CD8-positive, alpha-beta T cell (primary cell): ENCODE measurements at regions of chr17 and their contacts with region 1.

Region 1: DNA sequence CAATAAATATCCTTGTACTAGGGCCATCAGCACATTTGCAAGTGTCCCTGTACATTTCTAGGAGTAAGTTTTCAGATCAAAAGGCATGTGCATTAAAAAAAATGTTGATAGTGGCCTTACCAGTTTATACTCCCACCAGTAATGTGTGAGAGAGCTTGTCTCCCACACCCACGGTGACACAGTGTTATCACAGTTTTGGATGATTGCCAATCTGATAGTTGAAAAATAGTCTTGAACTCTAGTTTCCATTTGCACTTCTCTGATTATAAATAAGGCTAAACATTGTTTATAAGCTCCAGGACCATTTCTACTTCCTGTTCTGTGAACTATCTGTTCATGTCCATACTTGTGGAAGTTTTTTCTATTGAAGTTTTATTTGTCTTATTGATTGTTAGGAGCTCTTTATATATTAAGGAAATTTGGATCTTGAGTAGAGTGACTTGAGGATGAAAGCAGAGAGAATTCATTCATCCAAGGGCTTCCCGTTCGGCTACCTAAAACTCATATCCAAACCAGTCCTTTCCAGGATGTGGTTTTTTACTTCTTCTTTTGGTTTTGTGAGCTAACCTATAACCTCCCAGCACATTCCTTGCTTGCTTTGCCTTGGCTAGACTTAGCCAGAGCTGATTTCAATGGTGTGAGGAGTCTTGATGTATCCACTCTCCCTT is 25.9 kb upstream of the MPRIP start:
- DNase-seq: peak in 2 of 9 experiments; percentile 28 to 55
- ATAC-seq: peak; percentile 44
- H3K4me3 ChIP-seq: no peak overlapping the region
- H3K4me3 Mint-ChIP-seq: no peak overlapping the region
- H3K27ac ChIP-seq: peak overlapping the region in 1 of 2 experiments; percentile 26
- H3K27ac Mint-ChIP-seq: peak overlapping the region; percentile 14
- H3K4me1 ChIP-seq: peaks cover 8% of the 10 kb centered on the region
- H3K4me1 Mint-ChIP-seq: peaks cover 23% of the 10 kb centered on the region
- H3K27me3 ChIP-seq: no peaks in the 10 kb centered on the region
- H3K27me3 Mint-ChIP-seq: no peaks in the 10 kb centered on the region
- CTCF ChIP-seq: no peak

Region 2: GRCh38 chr17:16973760-16974540 is 42.4 kb before region 1 on chr17:
- CTCF ChIA-PET with region 1: no interaction called
- POLR2A ChIA-PET with region 1: no interaction called
- intact Hi-C with region 1: no loop called
- DNase-seq: no peak
- ATAC-seq: no peak
- H3K4me3 ChIP-seq: no peak overlapping the region
- H3K4me3 Mint-ChIP-seq: no peak overlapping the region
- H3K27ac ChIP-seq: no peak overlapping the region
- H3K27ac Mint-ChIP-seq: no peak overlapping the region
- H3K4me1 ChIP-seq: no peaks in the 10 kb centered on the region
- H3K4me1 Mint-ChIP-seq: no peaks in the 10 kb centered on the region
- H3K27me3 ChIP-seq: no peaks in the 10 kb centered on the region
- H3K27me3 Mint-ChIP-seq: no peaks in the 10 kb centered on the region
- CTCF ChIP-seq: no peak

Region 3: DNA sequence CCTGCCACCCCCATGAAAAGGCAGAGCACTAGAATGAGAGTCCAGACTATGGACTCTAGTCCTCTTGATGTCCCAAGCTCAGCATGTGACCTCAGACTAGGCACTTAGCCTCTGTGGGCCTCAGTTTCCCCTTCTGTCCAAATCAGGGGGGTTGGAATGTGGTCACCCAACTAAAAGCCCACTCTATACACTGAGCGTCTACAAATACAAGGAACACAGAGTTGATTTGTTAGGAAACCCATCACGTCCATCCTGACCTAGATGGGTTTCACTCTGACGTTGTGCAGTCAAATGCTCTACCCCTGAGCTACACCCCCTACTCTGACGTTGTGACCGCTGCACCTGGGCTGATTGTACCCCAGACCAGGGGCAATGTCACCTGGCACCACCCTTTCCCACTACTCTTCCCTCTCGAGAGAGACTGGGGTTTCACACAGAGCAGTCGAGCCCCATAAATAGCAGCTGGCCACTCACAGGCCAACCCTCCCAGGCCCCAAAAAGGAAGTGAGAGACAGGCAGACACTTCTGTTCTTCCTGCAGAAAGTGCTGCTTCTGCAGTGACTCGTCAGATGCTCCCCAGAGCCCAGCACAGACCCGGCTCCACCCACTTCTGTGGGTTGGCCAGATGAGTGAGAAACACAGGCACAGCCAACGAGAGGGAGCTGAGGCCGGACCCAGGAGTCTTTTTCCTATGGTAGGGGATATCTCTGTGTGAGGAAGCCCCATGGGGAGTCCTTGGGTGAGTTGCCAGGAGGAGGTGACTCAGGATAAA is 28.3 kb before region 1 on chr17:
- CTCF ChIA-PET with region 1: no interaction called
- POLR2A ChIA-PET with region 1: no interaction called
- intact Hi-C with region 1: no loop called
- DNase-seq: peak; percentile 16 to 75 (median 44)
- ATAC-seq: peak; percentile 68
- H3K4me3 ChIP-seq: peak overlapping the region in 1 of 2 experiments; percentile 4
- H3K4me3 Mint-ChIP-seq: peak overlapping the region; percentile 63
- H3K27ac ChIP-seq: peak overlapping the region in 1 of 2 experiments; percentile 79
- H3K27ac Mint-ChIP-seq: peak overlapping the region; percentile 89
- H3K4me1 ChIP-seq: peaks cover 41% of the 10 kb centered on the region
- H3K4me1 Mint-ChIP-seq: peaks cover 31% of the 10 kb centered on the region
- H3K27me3 ChIP-seq: no peaks in the 10 kb centered on the region
- H3K27me3 Mint-ChIP-seq: no peaks in the 10 kb centered on the region
- CTCF ChIP-seq: no peak

Region 4: GRCh38 chr17:17067257-17067656 is 50.9 kb after region 1 on chr17:
- CTCF ChIA-PET with region 1: no interaction called
- POLR2A ChIA-PET with region 1: no interaction called
- intact Hi-C with region 1: loop called in 1 of 2 experiments (anchors 5 kb)
- DNase-seq: no peak
- ATAC-seq: no peak
- H3K4me3 ChIP-seq: no peak overlapping the region
- H3K4me3 Mint-ChIP-seq: no peak overlapping the region
- H3K27ac ChIP-seq: no peak overlapping the region
- H3K27ac Mint-ChIP-seq: no peak overlapping the region
- H3K4me1 ChIP-seq: peaks cover 30% of the 10 kb centered on the region
- H3K4me1 Mint-ChIP-seq: peaks cover 73% of the 10 kb centered on the region
- H3K27me3 ChIP-seq: no peaks in the 10 kb centered on the region
- H3K27me3 Mint-ChIP-seq: no peaks in the 10 kb centered on the region
- CTCF ChIP-seq: no peak

Region 5: GRCh38 chr17:17580662-17581470 is 564.5 kb after region 1 on chr17:
- CTCF ChIA-PET with region 1: no interaction called
- POLR2A ChIA-PET with region 1: no interaction called
- intact Hi-C with region 1: no loop called
- DNase-seq: no peak
- ATAC-seq: no peak
- H3K4me3 ChIP-seq: no peak overlapping the region
- H3K4me3 Mint-ChIP-seq: no peak overlapping the region
- H3K27ac ChIP-seq: no peak overlapping the region
- H3K27ac Mint-ChIP-seq: no peak overlapping the region
- H3K4me1 ChIP-seq: no peaks in the 10 kb centered on the region
- H3K4me1 Mint-ChIP-seq: no peaks in the 10 kb centered on the region
- H3K27me3 ChIP-seq: no peaks in the 10 kb centered on the region
- H3K27me3 Mint-ChIP-seq: no peaks in the 10 kb centered on the region
- CTCF ChIP-seq: no peak